ENCODE measurements at regions of chr3 and their contacts with region 1.

Region 1: GRCh38 chr3:5426094-5426883 is 238.8 kb downstream of the EDEM1 start:
- ATAC-seq: peak; percentile 48 to 98 (median 88)
- H3K4me3 ChIP-seq: no peak overlapping the region
- H3K27ac ChIP-seq: no peak overlapping the region
- H3K4me1 ChIP-seq: peaks cover 10 to 15% of the 10 kb centered on the region in 2 donors

Region 2: GRCh38 chr3:5709704-5710103 is 283.4 kb after region 1 on chr3:
- in situ Hi-C with region 1: loop called in 1 of 9 experiments (anchors 25 kb)
- ATAC-seq: peak in 3 of 8 experiments; percentile 19 to 75 (median 68)
- H3K4me3 ChIP-seq: no peak overlapping the region
- H3K27ac ChIP-seq: no peak overlapping the region
- H3K4me1 ChIP-seq: peaks cover 0 to 3% of the 10 kb centered on the region in 2 donors